ENCODE measurements at regions of chr2 and their contacts with region 1.

Region 1: DNA sequence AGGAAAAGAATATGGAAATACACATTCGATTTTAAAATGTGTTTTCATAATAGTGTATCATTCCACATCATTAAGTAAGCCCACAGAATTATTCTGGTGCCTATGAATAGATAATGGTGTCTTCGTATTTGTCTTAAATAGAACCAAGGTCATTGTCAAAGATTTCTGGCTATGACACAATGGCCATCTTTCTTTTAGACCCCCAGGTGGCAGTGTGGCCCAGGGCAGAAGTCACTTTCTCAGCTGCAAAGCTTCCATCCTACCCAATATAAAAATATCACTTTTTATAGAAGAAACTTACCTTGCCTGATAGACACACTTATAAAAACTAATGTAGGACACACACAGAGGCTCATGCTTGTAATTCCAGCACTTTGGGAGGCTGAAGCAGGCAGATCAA is 57.5 kb downstream of the ZRANB3 start:
- DNase-seq: peak; percentile 68
- H3K4me3 Mint-ChIP-seq: no peak overlapping the region
- H3K27ac Mint-ChIP-seq: no peak overlapping the region
- H3K4me1 Mint-ChIP-seq: no peaks in the 10 kb centered on the region
- H3K27me3 Mint-ChIP-seq: no peaks in the 10 kb centered on the region

Region 2: DNA sequence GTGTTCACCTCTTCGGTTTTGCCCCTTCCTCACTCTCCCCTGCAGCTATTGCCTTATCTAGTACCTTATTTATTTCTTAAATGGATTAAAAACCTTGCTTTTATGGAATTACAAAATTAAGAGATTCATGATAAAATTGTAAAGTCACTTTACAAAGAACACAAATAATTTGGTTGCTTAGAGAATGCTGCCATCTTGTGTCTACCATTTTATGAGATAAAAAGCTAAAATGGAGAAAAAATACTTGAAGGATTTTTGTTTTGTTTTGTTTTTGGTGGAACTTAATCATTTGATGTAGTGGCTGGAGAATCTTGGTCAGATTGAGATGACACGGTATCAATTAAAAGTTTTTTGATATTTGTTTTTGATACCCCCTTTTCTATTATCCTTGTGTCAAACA is 127.3 kb after region 1 on chr2:
- intact Hi-C with region 1: loop called (anchors 5 kb)
- DNase-seq: no peak
- H3K4me3 Mint-ChIP-seq: no peak overlapping the region
- H3K27ac Mint-ChIP-seq: no peak overlapping the region
- H3K4me1 Mint-ChIP-seq: no peaks in the 10 kb centered on the region
- H3K27me3 Mint-ChIP-seq: no peaks in the 10 kb centered on the region

Region 3: GRCh38 chr2:135709992-135710391 is 236.4 kb after region 1 on chr2:
- intact Hi-C with region 1: loop called (anchors 1 kb)
- DNase-seq: peak; percentile 91
- H3K4me3 Mint-ChIP-seq: no peak overlapping the region
- H3K27ac Mint-ChIP-seq: no peak overlapping the region
- H3K4me1 Mint-ChIP-seq: peaks cover 2% of the 10 kb centered on the region
- H3K27me3 Mint-ChIP-seq: no peaks in the 10 kb centered on the region